ENCODE measurements at regions of chr19 and their contacts with region 1.

Region 1: DNA sequence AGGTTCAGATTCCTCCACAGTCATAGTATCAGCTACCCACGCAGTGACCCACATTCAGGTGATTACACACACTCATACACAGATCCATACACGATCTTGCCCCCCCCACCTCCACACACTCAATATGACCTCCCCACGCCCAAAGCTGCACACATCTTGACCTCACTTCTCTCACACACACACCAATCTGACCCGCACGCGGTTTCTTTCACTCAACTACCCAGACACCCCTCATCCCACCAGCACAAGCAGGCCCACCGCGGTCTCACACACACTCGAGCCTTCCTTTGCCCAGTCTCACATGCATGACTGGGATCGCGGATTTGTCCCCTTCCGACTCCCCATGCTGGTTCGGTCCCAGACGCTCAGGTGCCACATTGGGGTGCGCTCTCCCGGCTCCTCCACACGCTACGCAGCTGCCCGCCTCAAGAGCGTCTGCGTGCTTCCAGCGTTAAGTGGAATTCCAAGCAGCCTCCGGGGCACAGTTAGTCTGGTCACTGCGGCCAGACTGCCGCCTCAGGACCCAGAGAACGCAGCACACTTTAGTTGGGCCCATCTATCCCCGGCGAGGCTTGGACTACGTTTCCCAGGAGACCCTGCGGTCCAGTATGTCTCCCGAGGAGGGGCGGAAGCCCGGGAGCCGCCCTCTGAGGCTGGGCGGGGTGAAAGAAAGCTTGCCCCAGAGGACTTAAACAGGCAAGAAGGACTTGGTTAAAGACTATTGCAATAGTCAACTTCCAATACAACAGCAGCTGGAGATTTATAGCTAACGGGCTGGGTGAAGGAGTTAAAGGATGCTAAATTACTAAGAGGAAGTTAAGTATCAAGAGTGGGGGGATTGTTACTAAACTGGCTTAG is 746 bp upstream of the ZNF345 start:
- DNase-seq: peak; percentile 94 to 96 (median 95)
- ATAC-seq: peak; percentile 95 to 98 (median 96)
- H3K4me3 ChIP-seq: peak overlapping the region; percentile 59 to 99 (median 80)
- H3K27ac ChIP-seq: peak overlapping the region; percentile 71 to 77 (median 77)
- H3K4me1 ChIP-seq: peaks cover 0 to 6% (median 0%) of the 10 kb centered on the region in 4 donors
- H3K27me3 ChIP-seq: no peaks in the 10 kb centered on the region
- CTCF ChIP-seq: no peak
- POLR2A ChIP-seq: peak; percentile 48

Region 2: GRCh38 chr19:36772311-36773222 is 77.4 kb before region 1 on chr19 and contains the start of gene ZNF850:
- intact Hi-C with region 1: loop called in 1 of 2 experiments (anchors 10 kb)
- DNase-seq: peak; percentile 95 to 97 (median 96)
- ATAC-seq: peak; percentile 94 to 98 (median 96)
- H3K4me3 ChIP-seq: peak within 1 kb of the TSS; percentile 64 to 88 (median 70)
- H3K27ac ChIP-seq: peak within 1 kb of the TSS; percentile 50 to 77 (median 63)
- H3K4me1 ChIP-seq: peaks cover 0 to 10% (median 2%) of the 10 kb centered on the region in 4 donors
- H3K27me3 ChIP-seq: no peaks in the 10 kb centered on the region
- CTCF ChIP-seq: no peak
- POLR2A ChIP-seq: peak; percentile 37
- total RNA-seq, gene ZNF850: 0.68 to 1.1 (median 0.96) TPM

Region 3: GRCh38 chr19:36797786-36798108 is 52.2 kb before region 1 on chr19:
- intact Hi-C with region 1: no loop called
- DNase-seq: no peak
- ATAC-seq: no peak
- H3K4me3 ChIP-seq: peak overlapping the region; percentile 28 to 55 (median 46)
- H3K27ac ChIP-seq: peak overlapping the region in 2 of 3 donors; percentile 23 to 26
- H3K4me1 ChIP-seq: no peaks in the 10 kb centered on the region
- H3K27me3 ChIP-seq: no peaks in the 10 kb centered on the region
- CTCF ChIP-seq: no peak
- POLR2A ChIP-seq: no peak